ENCODE measurements at regions of chr14 and their contacts with region 1.

Region 1: DNA sequence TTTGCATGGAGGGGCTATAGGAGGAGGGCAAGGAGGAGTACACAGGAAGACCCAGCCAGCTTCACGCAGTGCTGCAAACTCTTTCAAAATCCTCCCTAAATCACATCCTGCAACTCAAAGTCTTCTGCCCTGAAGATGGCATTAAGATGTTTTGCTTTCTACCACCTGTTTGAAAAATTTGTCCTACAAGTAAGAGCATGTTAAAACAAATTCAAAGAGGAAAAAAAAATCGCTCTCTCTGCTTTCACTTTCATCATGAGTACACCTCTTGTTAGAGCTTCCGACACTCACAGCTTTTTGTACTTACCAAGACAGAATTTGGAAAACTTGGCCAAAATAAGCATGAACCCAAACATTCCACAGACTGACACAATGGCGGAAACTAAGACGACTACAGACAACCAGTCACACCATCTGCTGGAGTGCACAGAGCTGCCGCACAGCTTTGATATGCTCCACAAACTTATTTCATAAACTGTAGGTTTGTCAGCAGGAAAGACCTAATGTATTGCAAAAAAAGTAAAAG is 21.3 kb downstream of the GCH1 start:
- DNase-seq: peak; percentile 81
- H3K4me3 Mint-ChIP-seq: peak overlapping the region; percentile 83
- H3K27ac Mint-ChIP-seq: peak overlapping the region; percentile 90
- H3K4me1 Mint-ChIP-seq: peaks cover 43% of the 10 kb centered on the region
- H3K27me3 Mint-ChIP-seq: no peaks in the 10 kb centered on the region

Region 2: GRCh38 chr14:54893151-54893760 is 12.0 kb after region 1 on chr14:
- intact Hi-C with region 1: loop called (anchors 1 kb)
- DNase-seq: peak; percentile 76
- H3K4me3 Mint-ChIP-seq: no peak overlapping the region
- H3K27ac Mint-ChIP-seq: no peak overlapping the region
- H3K4me1 Mint-ChIP-seq: peaks cover 34% of the 10 kb centered on the region
- H3K27me3 Mint-ChIP-seq: no peaks in the 10 kb centered on the region

Region 3: DNA sequence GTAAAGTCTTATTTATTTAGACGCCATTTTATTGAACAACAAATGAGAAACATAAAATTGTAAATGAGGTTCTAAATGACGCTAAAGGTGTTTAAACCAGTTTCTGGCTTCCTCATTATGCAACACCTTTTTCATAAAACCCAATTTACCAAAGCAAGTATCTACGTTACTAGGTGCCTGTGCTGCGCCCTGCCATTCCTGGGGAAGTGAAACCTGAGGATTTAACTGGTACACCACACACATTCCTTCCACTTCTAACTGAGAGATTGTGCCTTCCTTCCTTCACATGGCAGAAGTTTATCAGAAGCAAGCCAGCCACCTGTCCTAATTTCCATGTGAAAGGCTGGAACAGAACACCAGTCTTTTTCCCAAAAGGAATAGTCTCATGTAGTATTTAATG is 61.6 kb after region 1 on chr14:
- intact Hi-C with region 1: no loop called
- DNase-seq: no peak
- H3K4me3 Mint-ChIP-seq: no peak overlapping the region
- H3K27ac Mint-ChIP-seq: no peak overlapping the region
- H3K4me1 Mint-ChIP-seq: peaks cover 3% of the 10 kb centered on the region
- H3K27me3 Mint-ChIP-seq: no peaks in the 10 kb centered on the region

Region 4: GRCh38 chr14:55170526-55170925 is 289.2 kb after region 1 on chr14:
- intact Hi-C with region 1: no loop called
- DNase-seq: no peak
- H3K4me3 Mint-ChIP-seq: no peak overlapping the region
- H3K27ac Mint-ChIP-seq: no peak overlapping the region
- H3K4me1 Mint-ChIP-seq: no peaks in the 10 kb centered on the region
- H3K27me3 Mint-ChIP-seq: no peaks in the 10 kb centered on the region

Region 5: GRCh38 chr14:55297611-55298441 is 416.5 kb after region 1 on chr14:
- intact Hi-C with region 1: no loop called
- DNase-seq: peak; percentile 76
- H3K4me3 Mint-ChIP-seq: peak overlapping the region; percentile 16
- H3K27ac Mint-ChIP-seq: peak overlapping the region; percentile 16
- H3K4me1 Mint-ChIP-seq: peaks cover 57% of the 10 kb centered on the region
- H3K27me3 Mint-ChIP-seq: no peaks in the 10 kb centered on the region

Measured in activated CD4-positive, alpha-beta T cell treated with anti-CD3 and anti-CD28 coated beads, Interleukin-2, amount 10 ng/mL, durations not matched to agents 24 days and 14 days (primary cell).